Mucosa of descending colon (tissue), 3 donors: ENCODE measurements at regions of chr4 and their contacts with region 1.

Region 1: DNA sequence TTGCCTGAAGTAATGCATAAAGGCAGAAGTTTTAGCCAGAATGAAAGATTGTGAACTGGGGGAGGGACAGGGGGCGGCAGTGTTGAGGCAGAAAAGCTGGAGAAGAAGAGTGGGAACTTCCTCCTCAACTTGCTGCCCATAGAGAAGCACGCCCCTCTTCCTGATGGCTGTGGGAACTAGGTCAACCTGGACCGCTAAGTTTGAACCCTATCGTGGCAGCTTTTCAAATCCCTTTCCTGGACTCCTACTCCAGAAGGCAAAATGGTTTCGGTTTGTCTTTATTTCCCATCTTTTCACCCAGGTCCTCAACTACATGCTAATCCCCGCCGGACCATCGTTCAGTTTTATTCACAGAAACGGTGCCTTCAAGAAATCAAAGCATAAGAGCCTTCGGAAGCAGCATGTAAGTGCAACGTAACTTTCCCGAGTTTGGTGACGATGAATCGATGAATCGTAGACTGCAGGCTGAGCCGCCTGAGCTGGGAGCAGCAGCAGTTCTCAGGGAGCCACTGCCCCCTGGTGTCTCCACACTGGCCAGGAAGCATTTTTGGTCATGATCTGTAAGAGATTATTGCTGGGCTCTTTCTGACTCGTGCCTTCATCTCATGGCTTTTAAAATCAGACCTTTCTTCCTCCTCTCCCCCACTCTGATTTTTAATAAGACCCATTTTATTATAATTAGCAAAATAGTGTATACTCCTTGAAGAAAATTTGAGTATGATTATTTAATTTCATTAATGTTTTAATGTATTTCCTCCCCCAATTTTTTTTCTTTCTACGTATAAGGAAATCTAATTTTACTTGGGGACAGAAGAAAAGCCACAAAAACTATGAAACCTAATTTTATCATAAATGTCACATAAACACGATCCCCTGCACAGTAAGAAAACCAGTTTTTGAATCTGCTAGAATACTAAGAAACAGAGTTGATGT is 21.4 kb downstream of the SPINK2 start:
- DNase-seq: peak; percentile 83 to 95 (median 91)
- ATAC-seq: peak; percentile 99
- H3K4me3 ChIP-seq: no peak overlapping the region
- H3K4me1 ChIP-seq: no peaks in the 10 kb centered on the region
- CTCF ChIP-seq: peak; percentile 82

Region 2: GRCh38 chr4:56587091-56587490 is 213.0 kb before region 1 on chr4:
- intact Hi-C with region 1: loop called in 1 of 2 experiments (anchors 10 kb)
- DNase-seq: no peak
- ATAC-seq: no peak
- H3K4me3 ChIP-seq: no peak overlapping the region
- H3K4me1 ChIP-seq: no peaks in the 10 kb centered on the region
- CTCF ChIP-seq: no peak